Ovary (tissue), 10 donors: ENCODE measurements at regions of chr22 and their contacts with region 1.

Region 1: GRCh38 chr22:45994491-45995404 is 17.8 kb upstream of the WNT7B start:
- DNase-seq: peak; percentile 75 to 91 (median 89)
- H3K4me3 ChIP-seq: no peak overlapping the region
- H3K27ac ChIP-seq: no peak overlapping the region
- H3K4me1 ChIP-seq: peaks cover 17% of the 10 kb centered on the region
- H3K27me3 ChIP-seq: no peaks in the 10 kb centered on the region
- CTCF ChIP-seq: peak; percentile 93 to 97 (median 97)
- EP300 ChIP-seq: no peak
- POLR2A ChIP-seq: no peak

Region 2: DNA sequence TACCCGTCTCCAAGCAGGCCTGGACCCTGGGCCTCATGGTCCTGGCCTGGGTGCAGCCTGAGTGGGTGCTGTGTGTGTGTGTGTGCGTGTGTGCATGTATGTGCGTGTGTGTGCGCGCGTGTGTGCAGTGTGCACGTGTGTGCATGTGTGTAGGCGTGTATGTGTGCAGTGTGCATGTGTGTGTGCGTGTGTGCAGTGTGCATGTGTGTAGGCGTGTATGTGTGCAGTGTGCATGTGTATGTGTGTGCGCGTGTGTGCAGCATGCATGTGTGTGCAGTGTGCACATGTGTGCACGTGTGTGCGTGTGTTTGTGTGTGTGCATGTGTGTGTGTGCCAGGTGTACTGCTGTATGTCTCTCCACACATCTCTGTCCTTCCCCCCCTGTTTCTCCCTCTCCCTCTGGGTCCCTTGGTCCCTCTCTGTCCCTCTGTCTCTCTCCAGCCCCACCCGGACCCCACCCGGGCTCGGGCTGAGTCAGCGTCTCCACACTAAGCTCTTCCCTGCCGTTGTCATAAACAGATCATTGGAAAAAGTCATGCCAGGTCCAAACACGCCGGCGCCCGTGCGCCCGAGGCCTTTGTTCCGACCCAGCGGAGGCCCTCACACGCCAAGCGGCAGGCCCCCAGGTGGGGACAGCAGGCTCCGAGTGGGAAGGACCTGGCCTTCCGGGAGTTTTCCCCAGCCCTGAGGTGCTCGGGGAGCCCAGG is 51.8 kb before region 1 on chr22:
- intact Hi-C with region 1: no loop called
- DNase-seq: no peak
- H3K4me3 ChIP-seq: no peak overlapping the region
- H3K27ac ChIP-seq: no peak overlapping the region
- H3K4me1 ChIP-seq: no peaks in the 10 kb centered on the region
- H3K27me3 ChIP-seq: no peaks in the 10 kb centered on the region
- CTCF ChIP-seq: no peak
- EP300 ChIP-seq: no peak
- POLR2A ChIP-seq: no peak

Region 3: GRCh38 chr22:46296257-46297150 is 301.8 kb after region 1 on chr22 and contains the start of gene GTSE1:
- intact Hi-C with region 1: loop called in 1 of 4 experiments (anchors 10 kb)
- DNase-seq: peak; percentile 96 to 98 (median 97)
- H3K4me3 ChIP-seq: peak within 1 kb of the TSS; percentile 44
- H3K27ac ChIP-seq: peak within 1 kb of the TSS; percentile 37 to 81
- H3K4me1 ChIP-seq: peaks cover 5% of the 10 kb centered on the region
- H3K27me3 ChIP-seq: no peaks in the 10 kb centered on the region
- CTCF ChIP-seq: no peak
- EP300 ChIP-seq: no peak
- POLR2A ChIP-seq: no peak
- total RNA-seq, gene GTSE1: 0.18 to 0.84 (median 0.34) TPM in 6 of 7 donors, not detected in the other

Region 4: GRCh38 chr22:46309526-46310085 is 314.9 kb after region 1 on chr22:
- intact Hi-C with region 1: loop called in 3 of 4 experiments (anchors 5 to 10 kb)
- DNase-seq: no peak
- H3K4me3 ChIP-seq: no peak overlapping the region
- H3K27ac ChIP-seq: no peak overlapping the region
- H3K4me1 ChIP-seq: no peaks in the 10 kb centered on the region
- H3K27me3 ChIP-seq: no peaks in the 10 kb centered on the region
- CTCF ChIP-seq: no peak
- EP300 ChIP-seq: no peak
- POLR2A ChIP-seq: no peak

Region 5: DNA sequence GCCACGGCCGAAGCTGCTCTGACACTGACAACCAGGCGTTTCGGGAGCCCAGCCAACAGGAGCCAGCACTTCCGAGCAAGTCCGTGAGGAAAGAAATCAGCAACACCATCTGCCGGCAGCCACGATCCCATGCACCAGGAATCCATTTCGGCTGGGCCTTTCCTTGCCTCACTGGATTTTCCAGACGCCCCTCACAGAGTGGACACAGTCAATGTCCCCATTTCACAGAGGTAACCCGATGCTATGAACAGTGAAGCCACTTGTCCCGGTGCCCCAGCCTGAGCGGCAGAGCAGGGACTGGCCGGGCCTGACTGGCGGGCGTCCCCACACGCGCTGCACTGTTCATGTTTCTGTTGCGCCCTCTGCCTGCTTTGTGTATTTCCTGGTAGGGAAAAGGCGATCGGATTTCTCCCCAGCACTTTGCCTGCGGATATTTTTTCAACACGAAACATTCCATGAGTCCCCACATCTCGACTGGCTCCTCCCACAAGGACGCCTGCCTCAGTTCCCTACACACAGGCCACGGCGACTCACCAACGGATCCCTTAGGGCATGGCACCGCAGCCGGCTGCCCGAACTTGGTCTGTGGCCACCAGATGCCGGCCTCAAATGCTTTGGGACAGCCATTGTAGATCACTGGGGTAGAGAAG is 396.0 kb after region 1 on chr22:
- intact Hi-C with region 1: loop called in 1 of 4 experiments (anchors 10 kb)
- DNase-seq: peak; percentile 55 to 76 (median 68)
- H3K4me3 ChIP-seq: no peak overlapping the region
- H3K27ac ChIP-seq: no peak overlapping the region
- H3K4me1 ChIP-seq: peaks cover 3% of the 10 kb centered on the region
- H3K27me3 ChIP-seq: no peaks in the 10 kb centered on the region
- CTCF ChIP-seq: peak in 2 of 3 donors; percentile 18 to 24
- EP300 ChIP-seq: no peak
- POLR2A ChIP-seq: no peak

Region 6: GRCh38 chr22:46542011-46542985 is 547.5 kb after region 1 on chr22:
- intact Hi-C with region 1: loop called in 2 of 4 experiments (anchors 10 kb)
- DNase-seq: peak; percentile 33 to 74 (median 57)
- H3K4me3 ChIP-seq: no peak overlapping the region
- H3K27ac ChIP-seq: no peak overlapping the region
- H3K4me1 ChIP-seq: no peaks in the 10 kb centered on the region
- H3K27me3 ChIP-seq: no peaks in the 10 kb centered on the region
- CTCF ChIP-seq: peak; percentile 41 to 58 (median 53)
- EP300 ChIP-seq: no peak
- POLR2A ChIP-seq: no peak